PC-3 (cell line): ENCODE measurements at regions of chrX and their contacts with region 1.

Region 1: DNA sequence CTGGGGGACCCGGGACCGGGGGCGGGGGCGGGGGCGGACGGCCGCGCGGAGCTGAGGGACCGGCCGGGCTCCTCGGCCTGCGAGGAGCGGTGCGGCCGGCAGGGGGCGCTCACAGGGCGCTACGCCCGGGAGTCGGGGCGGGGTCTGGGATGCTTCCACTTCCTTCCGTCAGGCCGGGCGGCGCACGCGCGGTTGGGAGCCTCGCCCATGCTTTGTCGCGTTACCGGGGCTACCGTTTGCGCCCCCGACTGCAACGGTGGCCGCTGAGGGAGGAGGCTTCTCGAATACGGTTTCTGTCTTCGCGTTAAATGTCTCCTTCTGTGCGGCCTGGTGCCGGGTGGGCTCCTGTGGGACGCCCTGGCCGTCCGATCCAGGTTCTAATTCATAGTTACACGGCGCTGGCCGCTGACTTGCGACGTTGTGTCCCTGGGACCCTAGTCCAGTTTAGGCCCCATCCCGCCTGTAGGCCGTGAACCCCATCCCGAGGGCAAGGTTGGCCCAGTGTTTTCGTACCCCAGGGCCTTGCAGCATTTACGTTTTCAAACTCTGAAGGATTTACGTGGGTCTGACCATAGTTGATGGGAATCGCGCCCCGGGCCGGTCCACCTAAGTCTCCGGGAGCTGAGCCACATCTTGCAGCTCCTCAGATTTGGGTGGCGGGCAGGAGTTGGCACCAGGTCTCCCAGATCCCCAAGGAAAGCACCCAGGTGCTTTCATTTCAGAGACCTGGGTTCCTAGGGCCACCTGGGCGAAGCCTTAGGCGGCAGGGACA is 549 bp downstream of the MSL3 start:
- DNase-seq: peak; percentile 83
- ATAC-seq: peak; percentile 49
- H3K4me3 ChIP-seq: peak overlapping the region; percentile 84
- H3K27ac ChIP-seq: peak overlapping the region; percentile 50
- H3K4me1 ChIP-seq: peaks cover 33% of the 10 kb centered on the region
- H3K27me3 ChIP-seq: no peaks in the 10 kb centered on the region
- CTCF ChIP-seq: peak; percentile 53

Region 2: DNA sequence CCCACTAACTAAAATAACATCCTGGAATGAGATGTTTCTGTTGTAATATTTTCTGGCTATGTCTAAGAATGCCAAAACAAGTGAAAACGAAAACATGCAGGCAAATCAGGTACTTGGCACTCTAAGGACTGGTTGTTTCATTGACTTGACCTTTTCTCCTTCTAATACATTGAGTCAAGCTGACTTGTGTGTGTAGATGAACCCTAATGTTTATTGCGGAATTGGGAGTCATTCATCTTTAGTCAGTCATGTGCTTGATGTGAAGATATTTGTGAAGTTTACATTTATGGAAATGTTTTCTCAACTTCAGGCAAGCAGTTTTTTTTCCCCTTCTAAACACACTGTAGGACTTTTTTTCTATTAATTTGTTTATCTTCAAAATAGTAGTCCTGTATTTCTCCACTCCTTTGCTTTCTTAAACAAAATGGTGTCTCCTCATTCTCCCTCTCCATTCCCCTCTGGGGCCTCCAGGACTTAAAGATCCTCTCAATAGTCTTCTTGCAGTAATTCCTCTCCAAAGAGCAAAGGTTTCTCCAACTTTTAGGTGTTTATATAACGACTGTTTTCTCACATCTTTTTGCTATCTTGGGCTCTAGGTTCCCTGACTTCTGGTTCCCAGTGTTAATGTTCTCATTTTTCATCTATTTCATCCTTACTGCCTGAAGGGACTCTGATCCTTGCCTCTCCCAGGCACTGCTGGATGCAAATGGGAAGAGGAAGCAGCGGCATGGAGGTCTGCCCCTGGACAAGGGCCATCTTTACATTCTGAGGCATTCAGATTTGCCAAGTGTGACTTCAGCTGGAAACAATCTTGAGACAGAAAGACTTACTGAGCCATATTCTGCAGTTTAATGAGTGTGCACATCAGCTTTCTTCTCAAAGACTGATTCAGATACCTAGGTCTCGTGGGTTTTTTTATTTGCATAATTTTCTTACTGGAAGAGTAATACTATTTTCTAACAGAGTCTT is 259.2 kb before region 1 on chrX:
- CTCF ChIA-PET with region 1: no interaction called
- POLR2A ChIA-PET with region 1: no interaction called
- intact Hi-C with region 1: no loop called
- DNase-seq: peak; percentile 6
- ATAC-seq: no peak; the same call in 1 of the 2 replicates
- H3K4me3 ChIP-seq: no peak overlapping the region
- H3K27ac ChIP-seq: no peak overlapping the region
- H3K4me1 ChIP-seq: no peaks in the 10 kb centered on the region
- H3K27me3 ChIP-seq: no peaks in the 10 kb centered on the region
- CTCF ChIP-seq: no peak

Region 3: DNA sequence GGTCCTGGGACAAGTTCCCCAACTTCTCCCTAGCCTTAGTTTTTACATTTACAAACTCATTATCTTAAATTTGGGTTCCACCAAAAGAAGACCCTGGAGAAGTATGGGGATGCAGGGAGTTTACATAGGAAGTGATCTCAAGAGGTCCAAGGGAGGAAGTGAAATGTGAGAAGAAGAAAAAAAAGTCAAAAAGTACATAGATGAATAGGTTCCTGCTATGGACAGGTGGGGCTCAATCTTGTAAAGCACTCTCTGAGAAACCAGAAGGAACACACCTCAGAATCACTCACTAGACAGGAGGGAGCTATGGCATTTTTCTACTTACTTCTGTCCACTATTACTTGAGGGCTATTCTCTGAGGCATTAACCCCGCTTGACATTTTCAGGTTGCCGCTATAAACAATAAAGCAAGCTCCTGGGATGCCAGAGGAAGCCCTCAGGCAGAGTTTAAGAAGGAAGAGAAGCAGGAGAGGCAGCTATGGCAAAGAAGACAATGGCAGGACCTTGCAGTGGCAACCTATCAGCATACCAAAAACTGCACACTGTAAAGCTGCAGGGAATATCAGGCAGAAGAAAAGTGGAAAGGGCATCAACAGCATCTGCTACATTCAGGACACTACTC is 149.4 kb before region 1 on chrX:
- CTCF ChIA-PET with region 1: no interaction called
- POLR2A ChIA-PET with region 1: no interaction called
- intact Hi-C with region 1: no loop called
- DNase-seq: no peak
- ATAC-seq: no peak
- H3K4me3 ChIP-seq: no peak overlapping the region
- H3K27ac ChIP-seq: no peak overlapping the region
- H3K4me1 ChIP-seq: no peaks in the 10 kb centered on the region
- H3K27me3 ChIP-seq: 0 out of 2 replicates have a peak, but pooled peaks cover 5% of the 10 kb centered on the region
- CTCF ChIP-seq: no peak

Region 4: GRCh38 chrX:11688201-11688600 is 70.4 kb before region 1 on chrX:
- CTCF ChIA-PET with region 1: no interaction called
- POLR2A ChIA-PET with region 1: interaction called, 4 read pairs
- intact Hi-C with region 1: loop called (anchors 5 kb)
- DNase-seq: peak; percentile 30
- ATAC-seq: peak; percentile 35; the same call in 1 of the 2 replicates
- H3K4me3 ChIP-seq: peak overlapping the region; percentile 18; the same call in 1 of the 2 replicates
- H3K27ac ChIP-seq: peak overlapping the region; percentile 42
- H3K4me1 ChIP-seq: peaks cover 14% of the 10 kb centered on the region
- H3K27me3 ChIP-seq: no peaks in the 10 kb centered on the region
- CTCF ChIP-seq: no peak